ENCODE measurements at regions of chr4 and their contacts with region 1.

Region 1: GRCh38 chr4:38663801-38664705 is at the start of gene KLF3:
- DNase-seq: peak; percentile 95 to 98 (median 96)
- ATAC-seq: peak; percentile 84 to 91 (median 86)
- H3K4me3 ChIP-seq: peak within 1 kb of the TSS; percentile 81 to 98 (median 92)
- H3K27ac ChIP-seq: peak within 1 kb of the TSS; percentile 97 to 100 (median 100)
- H3K4me1 ChIP-seq: peaks cover 0 to 54% (median 33%) of the 10 kb centered on the region in 12 donors
- H3K27me3 ChIP-seq: no peaks in the 10 kb centered on the region
- CTCF ChIP-seq: no peak
- POLR2A ChIP-seq: peak in 1 of 2 donors; percentile 92
- total RNA-seq, gene KLF3: 17.8 to 36.4 (median 21.1) TPM

Region 2: GRCh38 chr4:38387348-38387747 is 276.7 kb before region 1 on chr4:
- intact Hi-C with region 1: loop called in 2 of 10 experiments (anchors 5 to 10 kb)
- DNase-seq: peak in 4 of 5 donors; percentile 26 to 80 (median 65)
- ATAC-seq: peak; percentile 68 to 94 (median 86)
- H3K4me3 ChIP-seq: no peak overlapping the region
- H3K27ac ChIP-seq: peak overlapping the region in 8 of 12 donors; percentile 2 to 38 (median 24)
- H3K4me1 ChIP-seq: peaks cover 0 to 36% (median 19%) of the 10 kb centered on the region in 12 donors
- H3K27me3 ChIP-seq: no peaks in the 10 kb centered on the region
- CTCF ChIP-seq: no peak
- POLR2A ChIP-seq: no peak

Region 3: DNA sequence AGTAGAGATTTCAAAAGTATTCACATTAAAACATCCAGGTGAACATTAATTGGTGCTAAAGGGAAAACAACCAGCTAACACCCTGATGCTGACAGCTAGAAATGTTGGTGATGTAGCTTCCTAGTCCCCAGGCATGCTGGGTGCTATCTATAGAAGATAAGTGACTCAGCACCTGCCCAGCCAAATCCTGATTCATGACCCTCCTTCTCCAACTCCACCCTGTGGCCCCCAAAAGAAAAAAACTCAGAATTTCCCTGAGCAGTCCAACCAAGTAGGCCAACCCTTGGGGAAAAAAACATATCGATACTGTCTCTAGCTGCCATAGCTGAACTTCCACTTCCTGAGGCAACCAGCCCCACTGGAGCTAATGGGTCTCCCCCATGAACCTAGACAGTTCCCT is 197.7 kb before region 1 on chr4:
- intact Hi-C with region 1: loop called in 1 of 10 experiments (anchors 5 kb)
- DNase-seq: no peak
- ATAC-seq: no peak
- H3K4me3 ChIP-seq: no peak overlapping the region
- H3K27ac ChIP-seq: no peak overlapping the region
- H3K4me1 ChIP-seq: peaks cover 0 to 13% (median 0%) of the 10 kb centered on the region in 12 donors
- H3K27me3 ChIP-seq: no peaks in the 10 kb centered on the region
- CTCF ChIP-seq: no peak
- POLR2A ChIP-seq: no peak

Region 4: GRCh38 chr4:38562751-38563198 is 101.3 kb before region 1 on chr4:
- intact Hi-C with region 1: loop called in 2 of 10 experiments (anchors 10 kb)
- DNase-seq: peak in 4 of 5 donors; percentile 55 to 68 (median 64)
- ATAC-seq: peak; percentile 79 to 96 (median 90)
- H3K4me3 ChIP-seq: no peak overlapping the region
- H3K27ac ChIP-seq: peak overlapping the region in 9 of 12 donors; percentile 28 to 77 (median 54)
- H3K4me1 ChIP-seq: peaks cover 0 to 42% (median 29%) of the 10 kb centered on the region in 12 donors
- H3K27me3 ChIP-seq: no peaks in the 10 kb centered on the region
- CTCF ChIP-seq: no peak
- POLR2A ChIP-seq: no peak

Measured in heart left ventricle (tissue), 16 donors.